Heart left ventricle (tissue), 16 donors: ENCODE measurements at regions of chr1 and their contacts with region 1.

Region 1: GRCh38 chr1:219621047-219621786 is 8.3 kb upstream of the ZC3H11B start:
- DNase-seq: peak in 2 of 5 donors; percentile 33 to 51
- ATAC-seq: peak in 2 of 4 donors; percentile 58 to 67
- H3K4me3 ChIP-seq: no peak overlapping the region
- H3K27ac ChIP-seq: no peak overlapping the region
- H3K4me1 ChIP-seq: peaks cover 0 to 12% (median 0%) of the 10 kb centered on the region in 12 donors
- H3K27me3 ChIP-seq: no peaks in the 10 kb centered on the region
- CTCF ChIP-seq: no peak
- POLR2A ChIP-seq: no peak

Region 2: DNA sequence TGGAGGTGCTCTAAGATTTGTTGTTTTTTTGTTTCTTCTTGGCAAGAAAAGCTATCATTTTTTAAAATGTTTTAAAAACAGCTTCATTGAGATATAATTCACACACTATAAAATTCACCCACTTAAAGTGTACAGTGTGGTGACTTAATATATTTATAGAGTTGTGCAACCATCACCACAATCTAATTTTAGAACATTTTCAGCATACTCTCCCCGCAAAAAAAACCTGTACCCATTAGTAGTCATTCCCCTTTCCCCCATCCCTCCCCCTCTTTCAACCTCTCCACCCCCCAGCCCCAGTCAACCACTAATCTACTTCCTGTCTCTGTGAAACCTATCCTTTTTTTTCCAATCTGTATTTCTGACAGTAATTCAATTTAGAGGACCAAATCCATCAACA is 38.9 kb before region 1 on chr1:
- intact Hi-C with region 1: loop called in 1 of 10 experiments (anchors 5 kb)
- DNase-seq: no peak
- ATAC-seq: peak in 3 of 4 donors; percentile 46 to 69 (median 59)
- H3K4me3 ChIP-seq: no peak overlapping the region
- H3K27ac ChIP-seq: peak overlapping the region in 2 of 12 donors; percentile 19 to 23
- H3K4me1 ChIP-seq: peaks cover 0 to 27% (median 7%) of the 10 kb centered on the region in 12 donors
- H3K27me3 ChIP-seq: no peaks in the 10 kb centered on the region
- CTCF ChIP-seq: no peak
- POLR2A ChIP-seq: no peak

Region 3: GRCh38 chr1:219876798-219877209 is 255.6 kb after region 1 on chr1:
- intact Hi-C with region 1: no loop called
- DNase-seq: no peak
- ATAC-seq: no peak
- H3K4me3 ChIP-seq: no peak overlapping the region
- H3K27ac ChIP-seq: no peak overlapping the region
- H3K4me1 ChIP-seq: no peaks in the 10 kb centered on the region
- H3K27me3 ChIP-seq: peaks cover 0 to 31% (median 0%) of the 10 kb centered on the region in 9 donors
- CTCF ChIP-seq: peak in 1 of 12 donors; percentile 8
- POLR2A ChIP-seq: no peak